ENCODE measurements at regions of chr7 and their contacts with region 1.

Region 1: DNA sequence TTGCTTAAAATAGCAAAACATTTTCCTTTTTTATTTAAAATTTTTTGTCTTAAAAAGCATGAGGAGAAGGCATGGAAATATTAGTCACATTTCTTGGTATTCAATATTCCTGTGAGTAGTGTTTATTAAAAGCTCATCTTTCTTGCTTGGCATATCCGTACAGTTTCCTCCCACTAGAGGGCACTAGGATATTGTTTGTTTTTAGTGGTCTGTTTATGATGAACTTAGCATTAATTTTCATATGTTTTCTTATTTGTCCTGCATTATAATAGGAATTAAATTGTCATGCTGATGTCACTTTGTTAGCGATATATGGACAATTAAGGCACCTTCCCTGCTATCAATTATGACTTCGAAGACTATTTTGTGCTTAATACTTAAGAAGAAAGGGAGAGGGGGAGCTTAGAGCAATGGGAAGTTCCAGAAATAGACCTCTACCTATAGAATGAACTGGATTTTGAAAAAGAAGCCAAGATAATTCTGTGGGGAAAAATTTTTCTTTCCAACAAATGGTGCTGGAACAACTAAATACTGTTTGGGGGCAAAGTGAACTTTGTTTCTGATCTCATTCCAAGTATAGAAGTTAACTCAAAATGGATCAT is 91.0 kb upstream of the STRIP2 start:
- DNase-seq: no peak
- ATAC-seq: peak in 1 of 2 donors; percentile 40

Region 2: DNA sequence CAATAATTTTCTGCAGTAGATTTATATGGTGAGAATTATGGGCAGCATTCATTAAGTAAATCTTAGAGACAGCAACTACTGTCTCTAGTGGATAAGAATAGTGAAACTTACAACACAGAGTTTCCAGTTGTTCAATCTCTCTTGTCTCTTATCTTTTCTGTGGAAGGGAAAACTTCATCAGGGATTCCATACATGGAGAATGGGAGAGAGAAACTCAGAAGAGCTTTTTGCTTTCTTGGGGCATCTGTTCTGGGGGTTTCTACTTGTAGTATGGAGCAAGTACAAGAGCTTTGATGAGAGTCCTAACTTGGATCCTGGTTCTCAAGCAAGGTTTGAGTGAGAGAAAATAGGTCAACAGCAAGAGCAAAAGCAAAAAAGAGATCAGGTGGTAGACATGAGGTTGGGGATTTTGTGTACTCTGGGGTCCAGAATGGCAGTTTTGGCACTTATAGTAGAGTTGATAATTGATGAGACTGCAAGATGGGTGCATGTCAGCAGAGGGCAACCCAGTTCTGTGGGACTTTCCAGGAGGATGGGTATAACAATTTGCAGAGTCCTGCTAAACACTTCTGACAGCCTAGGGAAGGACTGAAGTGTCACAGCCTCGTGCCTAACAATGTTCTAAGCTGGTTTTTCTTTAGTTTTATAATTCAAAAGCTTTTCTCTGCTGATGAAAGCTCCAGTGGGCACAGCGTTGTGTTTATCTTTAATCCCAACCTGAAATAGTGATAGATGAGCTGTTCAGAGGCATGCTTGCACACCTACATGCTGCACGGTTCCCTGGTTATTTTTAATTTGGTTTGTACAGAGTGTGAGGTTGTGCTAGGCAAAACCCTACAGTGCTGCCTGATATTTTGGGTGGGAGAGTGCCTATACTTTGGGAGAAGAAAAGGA is 59.0 kb after region 1 on chr7:
- intact Hi-C with region 1: no loop called
- DNase-seq: no peak
- ATAC-seq: peak; percentile 47

Region 3: DNA sequence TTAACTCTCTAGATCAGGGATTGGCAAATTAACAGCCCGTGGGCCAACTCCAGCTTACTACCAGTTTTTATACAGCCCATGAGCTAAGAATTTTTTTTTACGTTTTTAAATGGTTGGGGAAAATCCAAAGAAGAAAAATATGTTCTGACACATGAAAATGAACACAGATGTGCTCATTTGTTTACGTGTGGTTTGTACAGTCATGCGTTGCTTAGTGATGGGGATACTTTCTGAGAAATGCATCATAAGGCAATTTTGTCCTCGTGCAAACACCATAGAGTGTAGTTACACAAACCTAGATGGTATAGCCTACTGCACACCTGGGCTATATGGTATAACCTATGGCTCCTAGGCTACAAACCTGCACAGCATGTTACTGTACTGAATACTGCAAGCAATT is 150.8 kb after region 1 on chr7:
- intact Hi-C with region 1: no loop called
- DNase-seq: no peak
- ATAC-seq: no peak

Region 4: GRCh38 chr7:129635300-129636029 is 292.3 kb after region 1 on chr7:
- intact Hi-C with region 1: loop called in 1 of 2 experiments (anchors 5 kb)
- DNase-seq: peak; percentile 52
- ATAC-seq: peak; percentile 73 to 87